ENCODE measurements at regions of chr3 and their contacts with region 1.

Region 1: DNA sequence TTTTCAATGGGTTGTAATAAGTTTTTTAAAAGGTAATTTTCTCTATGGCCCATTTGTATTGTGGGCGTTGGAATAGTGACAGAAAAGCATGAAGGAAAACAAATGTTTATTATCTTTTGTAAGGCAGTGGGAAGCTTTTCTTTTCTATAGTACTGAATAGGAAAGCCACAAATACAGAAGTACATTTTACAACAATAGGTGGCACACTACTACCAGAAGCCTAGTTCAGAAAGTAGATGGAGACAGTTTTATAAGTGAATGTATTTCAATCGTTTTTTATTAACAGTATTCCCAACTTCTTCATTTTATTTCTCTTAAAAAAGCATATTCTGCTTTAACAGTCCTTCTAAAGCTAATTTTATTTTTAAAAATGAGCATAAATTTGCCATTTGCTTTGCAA is 296.7 kb downstream of the PTPRG start:
- DNase-seq: no peak
- ATAC-seq: peak; percentile 43 to 69

Region 2: DNA sequence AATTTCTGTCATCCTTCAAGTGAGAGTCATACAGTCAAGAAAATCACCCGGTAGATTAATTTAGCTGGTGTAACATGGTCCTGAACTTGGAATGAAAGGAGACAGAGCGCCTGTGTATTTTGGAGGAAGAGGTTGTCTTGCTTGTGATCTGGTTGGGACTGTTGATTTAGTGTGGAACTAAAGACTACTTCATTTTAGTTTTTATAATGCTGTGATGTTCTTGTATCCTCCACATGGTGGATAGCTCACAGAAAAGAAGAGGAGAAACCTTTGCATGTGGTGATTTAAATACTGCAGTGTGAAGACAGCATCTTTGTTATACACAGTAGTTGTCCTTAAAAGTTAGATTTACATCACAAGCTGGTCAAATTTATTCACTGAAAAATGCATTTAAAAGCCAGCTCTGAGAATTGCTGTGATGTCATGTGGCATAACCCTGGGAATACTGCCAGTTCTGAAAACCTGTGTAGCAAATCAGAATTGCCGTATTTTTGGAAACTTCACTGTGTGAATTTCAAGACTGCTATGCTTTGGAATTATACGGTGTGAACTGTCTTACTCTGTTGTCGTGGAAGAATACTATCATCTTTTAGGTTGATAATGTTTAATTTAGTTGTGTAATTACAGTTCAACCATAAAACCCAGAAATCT is 28.2 kb before region 1 on chr3:
- intact Hi-C with region 1: no loop called
- DNase-seq: no peak
- ATAC-seq: peak; percentile 10 to 20

Region 3: GRCh38 chr3:62131592-62131991 is 273.5 kb after region 1 on chr3:
- intact Hi-C with region 1: loop called in 1 of 2 experiments (anchors 10 kb)
- DNase-seq: no peak
- ATAC-seq: no peak

Measured in left cardiac atrium (tissue), 4 donors.